Dendritic cell treated with granulocyte-macrophage colony-stimulating factor and Interleukin-4, amounts not matched to agents 40 ng/mL and 50 ng/mL, for 4 days (primary cell): ENCODE measurements at regions of chr3 and their contacts with region 1.

Region 1: GRCh38 chr3:107271787-107272387 is 105.4 kb upstream of the CCDC54 start:
- H3K4me3 Mint-ChIP-seq: no peak overlapping the region
- H3K27ac Mint-ChIP-seq: no peak overlapping the region
- H3K4me1 Mint-ChIP-seq: no peaks in the 10 kb centered on the region
- H3K27me3 Mint-ChIP-seq: no peaks in the 10 kb centered on the region

Region 2: DNA sequence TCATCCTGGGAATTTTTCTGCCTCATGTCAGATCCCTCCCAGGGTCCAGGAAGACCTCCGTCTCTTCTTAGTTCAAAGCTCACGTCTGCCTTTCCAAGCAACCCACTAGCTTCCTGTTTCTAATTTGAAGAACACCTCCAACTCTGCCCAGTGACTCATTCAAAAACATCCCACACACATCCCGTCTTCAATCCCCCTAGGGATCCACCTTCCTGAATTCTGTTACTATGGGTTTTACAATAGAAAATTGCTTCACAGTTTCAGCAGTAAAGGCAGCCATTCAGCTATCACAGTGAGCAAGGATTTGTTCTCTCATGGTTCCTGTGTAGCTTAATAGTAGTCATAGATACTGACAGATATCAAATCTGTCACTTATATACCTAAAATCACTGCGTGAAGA is 202.9 kb before region 1 on chr3:
- intact Hi-C with region 1: no loop called
- H3K4me3 Mint-ChIP-seq: no peak overlapping the region
- H3K27ac Mint-ChIP-seq: no peak overlapping the region
- H3K4me1 Mint-ChIP-seq: peaks cover 6% of the 10 kb centered on the region
- H3K27me3 Mint-ChIP-seq: peaks cover 7% of the 10 kb centered on the region

Region 3: GRCh38 chr3:107421170-107421792 is 149.4 kb after region 1 on chr3:
- intact Hi-C with region 1: loop called (anchors 1 kb)
- H3K4me3 Mint-ChIP-seq: no peak overlapping the region
- H3K27ac Mint-ChIP-seq: no peak overlapping the region
- H3K4me1 Mint-ChIP-seq: peaks cover 5% of the 10 kb centered on the region
- H3K27me3 Mint-ChIP-seq: peaks cover 5% of the 10 kb centered on the region

Region 4: DNA sequence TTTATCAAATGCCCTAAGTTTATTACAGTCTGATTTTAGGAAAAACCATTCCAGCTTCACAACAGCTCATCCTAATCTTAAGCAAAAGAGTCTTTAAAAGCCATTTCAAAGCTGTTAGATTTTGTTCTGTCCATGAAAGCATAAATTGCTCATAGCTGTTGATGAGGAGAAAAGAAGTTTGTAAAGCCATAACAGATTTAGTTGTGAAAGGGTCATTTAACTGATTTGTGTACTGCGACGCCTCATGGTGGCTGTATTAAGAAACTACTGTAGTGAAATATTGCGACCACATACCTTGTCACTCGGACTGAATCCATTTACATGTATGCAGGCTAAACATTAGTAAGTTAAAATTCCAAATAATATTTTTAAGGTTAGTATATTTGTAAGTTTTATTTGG is 271.8 kb after region 1 on chr3:
- intact Hi-C with region 1: loop called (anchors 2 kb)
- H3K4me3 Mint-ChIP-seq: no peak overlapping the region
- H3K27ac Mint-ChIP-seq: no peak overlapping the region
- H3K4me1 Mint-ChIP-seq: no peaks in the 10 kb centered on the region
- H3K27me3 Mint-ChIP-seq: no peaks in the 10 kb centered on the region